Thyroid gland (tissue), 4 donors: ENCODE measurements at regions of chrX and their contacts with region 1.

Region 1: DNA sequence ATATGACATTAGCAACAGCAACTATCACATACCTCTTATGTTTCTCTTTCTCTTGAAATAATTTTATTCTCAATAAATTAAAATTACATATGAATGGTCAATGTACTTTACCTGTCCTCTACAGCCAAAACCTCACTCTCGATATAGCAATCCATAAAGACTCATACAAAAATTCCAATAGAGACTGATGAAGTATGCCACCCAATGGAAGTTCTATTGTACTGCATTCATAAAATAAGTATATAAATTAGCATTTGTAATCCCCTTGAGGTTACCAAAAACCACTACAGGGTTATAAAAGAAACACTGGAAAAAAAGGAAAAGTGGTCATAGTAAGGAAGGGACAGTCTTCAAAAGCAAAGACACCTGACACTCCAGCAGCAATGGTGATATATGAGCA is 32.8 kb downstream of the CLDN2 start:
- DNase-seq: no peak
- H3K4me3 ChIP-seq: no peak overlapping the region
- H3K27ac ChIP-seq: no peak overlapping the region
- H3K4me1 ChIP-seq: no peaks in the 10 kb centered on the region
- H3K27me3 ChIP-seq: no peaks in the 10 kb centered on the region
- CTCF ChIP-seq: peak in 4 of 6 experiments; percentile 19 to 62 (median 49)
- POLR2A ChIP-seq: no peak

Region 2: DNA sequence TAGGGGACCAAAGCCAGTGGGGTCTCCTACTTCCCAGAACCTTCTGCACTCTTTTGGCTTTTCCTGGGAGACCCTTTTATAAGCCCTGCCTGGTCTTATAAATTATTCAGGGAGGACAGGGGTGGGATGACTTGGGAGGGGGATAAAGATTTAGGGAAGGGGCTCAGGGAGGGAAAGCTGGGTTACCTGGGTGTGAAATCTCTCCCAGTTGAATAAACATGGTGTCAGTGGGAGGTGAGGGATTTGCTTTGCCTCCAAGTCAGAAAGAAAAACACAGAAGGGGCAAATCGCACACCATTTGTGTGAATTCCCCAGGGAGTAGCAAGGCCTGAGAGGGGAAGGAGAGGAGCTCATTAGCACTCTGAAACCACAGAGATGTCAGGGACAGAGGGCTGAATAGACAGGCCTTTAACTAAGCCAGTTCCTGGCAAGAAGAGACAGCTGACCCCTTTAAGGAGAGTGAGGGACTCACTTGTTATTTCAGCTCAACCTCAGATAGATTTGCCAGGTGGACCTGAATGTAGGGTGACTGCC is 49.6 kb before region 1 on chrX and contains the start of gene RIPPLY1:
- intact Hi-C with region 1: loop called (anchors 5 kb)
- DNase-seq: no peak
- H3K4me3 ChIP-seq: no peak within 1 kb of the TSS
- H3K27ac ChIP-seq: peak within 1 kb of the TSS in 1 of 3 donors; percentile 73
- H3K4me1 ChIP-seq: peaks cover 14 to 20% of the 10 kb centered on the region in 2 donors
- H3K27me3 ChIP-seq: no peaks in the 10 kb centered on the region
- CTCF ChIP-seq: no peak
- POLR2A ChIP-seq: no peak
- total RNA-seq, gene RIPPLY1: not detected

Region 3: GRCh38 chrX:106976416-106976815 is 23.4 kb after region 1 on chrX:
- intact Hi-C with region 1: no loop called
- DNase-seq: no peak
- H3K4me3 ChIP-seq: no peak overlapping the region
- H3K27ac ChIP-seq: no peak overlapping the region
- H3K4me1 ChIP-seq: no peaks in the 10 kb centered on the region
- H3K27me3 ChIP-seq: no peaks in the 10 kb centered on the region
- CTCF ChIP-seq: no peak
- POLR2A ChIP-seq: no peak